GM10248 (cell line): ENCODE measurements at regions of chr1 and their contacts with region 1.

Region 1: GRCh38 chr1:84724128-84724860 is 34.0 kb upstream of the SSX2IP start:
- DNase-seq: peak; percentile 24
- CTCF ChIP-seq: peak; percentile 36

Region 2: DNA sequence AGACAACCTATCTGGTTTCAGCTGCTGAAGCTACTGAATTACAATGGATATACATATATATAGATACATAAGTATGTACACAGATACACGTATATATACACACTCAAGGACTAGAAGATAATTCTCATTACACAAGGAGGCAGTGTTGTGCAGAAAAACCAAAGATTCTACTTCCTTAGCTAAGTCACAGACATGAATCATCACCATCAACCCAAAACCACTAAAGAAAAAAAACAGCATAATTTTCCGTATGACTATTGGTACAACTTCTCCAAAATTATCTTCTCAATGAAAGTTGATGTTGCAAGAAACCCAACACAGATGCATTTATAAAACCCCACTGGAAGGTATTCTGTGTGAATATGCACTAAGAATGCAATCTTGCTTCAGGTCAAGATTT is 282.0 kb before region 1 on chr1:
- CTCF ChIA-PET with region 1: interaction called, 15 read pairs
- POLR2A ChIA-PET with region 1: no interaction called
- DNase-seq: peak; percentile 65
- CTCF ChIP-seq: peak; percentile 52

Region 3: DNA sequence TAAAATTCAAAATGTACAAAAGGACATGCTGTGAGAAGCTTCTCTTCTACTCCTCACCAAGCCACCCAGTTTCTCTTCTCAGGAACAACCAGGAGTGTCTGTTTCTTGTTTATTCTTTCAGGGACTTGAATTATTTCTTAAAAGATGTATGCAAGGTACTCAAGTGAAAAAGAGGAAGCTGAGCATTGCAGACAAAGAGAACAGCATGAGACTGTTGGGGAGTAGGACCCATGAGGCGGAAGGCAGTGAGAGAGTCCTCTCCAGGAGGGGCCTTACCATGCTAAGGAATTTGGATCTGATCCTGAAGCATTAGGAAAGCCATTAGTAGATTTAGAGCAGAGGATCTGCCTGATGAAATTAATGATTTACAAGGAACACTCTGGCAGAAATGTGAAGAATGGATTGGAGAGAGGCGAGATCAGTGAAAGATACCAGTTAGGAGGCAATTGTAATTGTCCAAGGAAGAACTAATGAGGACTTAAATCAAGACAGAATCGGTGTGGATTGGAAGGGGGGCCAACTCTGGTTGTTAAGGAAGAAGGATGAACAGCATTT is 19.3 kb before region 1 on chr1:
- CTCF ChIA-PET with region 1: interaction called, 10 read pairs
- POLR2A ChIA-PET with region 1: no interaction called
- DNase-seq: no peak
- CTCF ChIP-seq: no peak

Region 4: DNA sequence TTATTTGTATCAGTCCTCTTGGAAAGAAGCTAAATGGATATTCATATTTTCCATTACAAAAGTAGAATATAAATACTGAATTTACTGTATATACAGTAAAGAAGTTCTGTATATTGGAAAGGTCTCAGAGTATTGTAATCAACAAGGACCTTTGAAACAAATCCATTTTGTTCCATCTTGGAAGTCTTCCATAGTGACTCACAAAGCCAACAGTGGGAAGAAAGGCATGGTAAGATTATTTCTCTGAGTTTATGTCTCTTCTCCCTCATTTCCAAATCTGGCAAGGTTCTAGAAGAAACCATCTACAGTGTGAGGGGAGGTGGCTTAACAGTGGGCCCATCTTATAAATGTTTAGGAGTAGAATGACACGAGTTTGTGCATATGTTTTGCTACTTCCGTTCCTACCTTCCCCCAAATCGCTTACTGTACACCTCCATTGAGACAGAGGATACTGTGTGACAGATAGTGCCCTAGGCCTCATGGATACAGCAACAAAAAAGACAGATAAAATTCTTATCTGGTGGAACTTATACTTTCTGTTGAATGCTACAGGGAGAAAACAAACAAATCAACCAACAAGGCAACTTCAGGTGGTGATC is 11.9 kb before region 1 on chr1:
- CTCF ChIA-PET with region 1: interaction called, 34 read pairs
- POLR2A ChIA-PET with region 1: no interaction called
- DNase-seq: no peak
- CTCF ChIP-seq: no peak

Region 5: GRCh38 chr1:84742653-84743052 is 18.4 kb after region 1 on chr1:
- CTCF ChIA-PET with region 1: interaction called, 32 read pairs
- POLR2A ChIA-PET with region 1: no interaction called
- DNase-seq: no peak
- CTCF ChIP-seq: no peak